A549 (cell line): ENCODE measurements at regions of chr10 and their contacts with region 1.

Region 1: DNA sequence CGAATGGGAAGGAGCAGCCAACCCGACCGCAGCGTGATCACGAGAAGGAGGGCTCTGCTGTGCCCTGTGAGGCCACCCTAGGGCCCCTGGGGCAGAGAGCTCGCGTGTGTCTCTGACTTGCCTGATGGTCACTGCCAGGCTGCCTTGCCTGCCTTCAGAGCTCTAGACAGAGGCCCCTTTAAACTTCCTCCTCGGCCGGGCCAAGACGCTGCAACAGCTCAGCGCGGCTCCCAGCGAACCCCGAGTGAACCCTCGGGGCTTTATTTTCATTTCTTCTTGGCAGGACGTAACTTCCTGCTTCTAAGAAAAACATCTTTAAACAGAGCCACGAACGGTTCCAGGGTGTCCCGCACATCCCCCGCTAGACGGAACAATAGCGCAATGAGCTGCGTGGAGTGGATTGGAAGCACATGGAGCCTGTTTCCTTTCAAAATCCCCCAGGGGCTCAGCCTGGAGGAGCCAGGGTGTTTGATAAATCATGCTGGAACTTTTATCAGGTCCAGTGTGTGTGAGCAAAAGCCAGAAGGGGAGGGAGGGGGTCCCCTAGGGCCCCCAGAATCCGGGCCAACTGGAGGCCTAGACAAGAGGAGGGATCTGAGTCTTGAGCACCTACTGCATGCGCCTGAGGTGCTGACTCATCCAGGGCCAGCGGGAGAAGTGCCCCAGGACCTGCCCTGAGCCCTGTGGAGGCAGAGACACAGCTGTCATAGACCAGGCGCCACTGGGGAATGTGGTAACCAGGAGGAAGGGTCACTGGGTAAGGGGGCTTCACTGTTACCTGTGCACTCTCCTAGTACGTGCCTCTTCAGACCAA is 134.1 kb upstream of the GDF10 start:
- DNase-seq: no peak
- ATAC-seq: no peak; a peak in 1 of 6 replicates
- H3K4me3 ChIP-seq: no peak overlapping the region
- H3K27ac ChIP-seq: 0 out of 6 replicates have a peak overlapping the region, but pooled peaks of 1 of the 2 experiments have one; percentile 21
- H3K4me1 ChIP-seq: peaks cover 6% of the 10 kb centered on the region; the same call in 1 of the 3 replicates
- CTCF ChIP-seq: no peak
- EP300 ChIP-seq: no peak
- POLR2A ChIP-seq: no peak
- RAD21 ChIP-seq: no peak

Region 2: DNA sequence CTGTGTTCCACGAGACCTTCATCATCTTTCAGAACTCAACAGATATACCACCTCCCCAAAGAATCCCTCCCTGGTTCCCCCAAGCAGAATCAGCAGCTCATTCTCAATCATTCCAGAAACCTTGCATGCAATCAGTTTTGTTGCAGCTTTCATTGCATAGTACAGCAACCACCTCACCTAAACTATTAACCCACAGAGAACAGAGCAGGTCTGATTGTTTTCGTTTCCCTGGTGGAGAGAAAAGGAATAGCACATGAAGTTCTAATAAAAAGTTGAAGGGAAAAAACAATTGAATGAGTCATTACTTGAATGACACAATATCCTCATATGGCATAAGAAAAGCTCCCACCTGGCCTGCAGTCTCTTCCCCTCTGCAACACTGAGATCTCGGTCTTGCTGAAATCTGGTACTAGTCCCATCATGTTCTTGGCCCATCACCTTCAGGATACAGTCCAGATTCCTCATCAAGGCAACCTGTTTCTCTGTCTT is 13.0 kb before region 1 on chr10:
- CTCF ChIA-PET with region 1: interaction called, 10 read pairs
- POLR2A ChIA-PET with region 1: no interaction called
- DNase-seq: peak; percentile 14 to 33
- ATAC-seq: peak; percentile 59 to 64; a peak in 4 of 6 replicates
- H3K4me3 ChIP-seq: no peak overlapping the region
- H3K27ac ChIP-seq: no peak overlapping the region
- H3K4me1 ChIP-seq: no peaks in the 10 kb centered on the region
- CTCF ChIP-seq: no peak
- EP300 ChIP-seq: no peak
- POLR2A ChIP-seq: no peak
- RAD21 ChIP-seq: no peak